MCF 10A (cell line): ENCODE measurements at regions of chr9 and their contacts with region 1.

Region 1: GRCh38 chr9:33852216-33852826 is 35.4 kb downstream of the UBE2R2 start:
- DNase-seq: peak; percentile 76
- H3K4me3 Mint-ChIP-seq: no peak overlapping the region
- H3K27ac Mint-ChIP-seq: no peak overlapping the region
- H3K4me1 Mint-ChIP-seq: peaks cover 12% of the 10 kb centered on the region
- H3K27me3 Mint-ChIP-seq: no peaks in the 10 kb centered on the region
- CTCF ChIP-seq: peak; percentile 74

Region 2: DNA sequence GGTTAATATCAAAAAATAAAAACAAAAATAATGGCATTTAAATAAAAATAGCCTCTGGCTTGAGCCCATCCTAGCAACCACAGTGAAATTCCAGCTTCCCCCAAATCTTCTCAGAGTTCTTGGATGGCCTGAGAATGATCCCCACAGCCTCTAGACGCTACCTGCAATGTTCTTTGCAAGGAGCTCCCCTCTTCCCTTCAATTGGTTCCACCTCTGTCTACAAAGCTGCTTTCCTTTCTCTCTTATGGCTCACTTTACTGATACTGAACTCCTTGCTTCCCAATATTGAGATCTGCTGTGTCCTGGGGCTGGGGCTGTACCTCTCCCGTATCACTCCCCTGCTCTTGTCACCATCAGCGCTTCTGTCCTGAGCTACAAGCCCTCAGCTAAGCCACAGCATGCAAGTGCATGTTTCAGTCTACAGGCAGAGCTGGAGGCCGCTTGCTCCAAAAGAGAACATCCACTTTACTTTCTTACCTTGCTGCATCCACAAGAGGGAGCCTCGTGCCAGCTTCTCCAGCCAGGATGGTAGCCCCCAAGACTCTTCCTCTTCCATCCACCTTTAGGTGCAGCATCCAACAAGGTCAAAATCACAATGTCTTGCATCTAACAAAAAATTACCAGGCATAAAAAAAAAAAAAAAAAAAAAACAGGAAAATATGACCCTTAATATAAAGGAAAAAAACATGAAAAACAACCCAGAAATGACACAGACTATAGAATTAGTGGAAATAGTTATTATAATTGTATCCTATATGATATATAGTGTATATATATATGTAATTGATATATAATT is 114.3 kb before region 1 on chr9:
- CTCF ChIA-PET with region 1: interaction called, 18 read pairs
- POLR2A ChIA-PET with region 1: interaction called, 4 read pairs
- intact Hi-C with region 1: loop called (anchors 1 kb)
- DNase-seq: peak; percentile 71
- H3K4me3 Mint-ChIP-seq: no peak overlapping the region
- H3K27ac Mint-ChIP-seq: peak overlapping the region; percentile 14
- H3K4me1 Mint-ChIP-seq: peaks cover 23% of the 10 kb centered on the region
- H3K27me3 Mint-ChIP-seq: no peaks in the 10 kb centered on the region
- CTCF ChIP-seq: peak; percentile 88